OCI-LY7 (cell line): ENCODE measurements at regions of chr17 and their contacts with region 1.

Region 1: DNA sequence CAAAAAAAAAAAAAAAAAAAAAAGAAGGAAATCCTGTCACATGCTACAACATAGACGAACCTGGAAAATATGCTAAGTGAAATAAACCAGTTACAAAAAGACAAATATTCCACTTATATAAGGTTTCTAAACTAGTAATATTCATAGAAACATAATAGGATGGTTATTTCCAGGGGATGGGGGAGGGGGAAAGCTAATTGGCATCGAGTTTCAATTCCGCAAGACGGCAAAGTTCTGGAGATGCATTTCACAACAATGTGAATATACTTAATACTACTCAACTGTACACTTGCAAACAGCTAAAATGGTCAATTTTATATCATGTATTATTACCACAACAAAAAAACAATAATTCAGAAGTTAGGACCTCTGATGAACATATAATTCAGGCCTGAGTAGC is 37.9 kb upstream of the ABCA9 start:
- DNase-seq: no peak
- H3K4me3 ChIP-seq: no peak overlapping the region
- H3K27ac ChIP-seq: no peak overlapping the region
- H3K4me1 ChIP-seq: peaks cover 22% of the 10 kb centered on the region
- CTCF ChIP-seq: no peak

Region 2: GRCh38 chr17:68937890-68938514 is 160.6 kb before region 1 on chr17:
- CTCF ChIA-PET with region 1: no interaction called
- POLR2A ChIA-PET with region 1: no interaction called
- intact Hi-C with region 1: no loop called
- DNase-seq: no peak
- H3K4me3 ChIP-seq: no peak overlapping the region
- H3K27ac ChIP-seq: no peak overlapping the region
- H3K4me1 ChIP-seq: no peaks in the 10 kb centered on the region
- CTCF ChIP-seq: no peak

Region 3: DNA sequence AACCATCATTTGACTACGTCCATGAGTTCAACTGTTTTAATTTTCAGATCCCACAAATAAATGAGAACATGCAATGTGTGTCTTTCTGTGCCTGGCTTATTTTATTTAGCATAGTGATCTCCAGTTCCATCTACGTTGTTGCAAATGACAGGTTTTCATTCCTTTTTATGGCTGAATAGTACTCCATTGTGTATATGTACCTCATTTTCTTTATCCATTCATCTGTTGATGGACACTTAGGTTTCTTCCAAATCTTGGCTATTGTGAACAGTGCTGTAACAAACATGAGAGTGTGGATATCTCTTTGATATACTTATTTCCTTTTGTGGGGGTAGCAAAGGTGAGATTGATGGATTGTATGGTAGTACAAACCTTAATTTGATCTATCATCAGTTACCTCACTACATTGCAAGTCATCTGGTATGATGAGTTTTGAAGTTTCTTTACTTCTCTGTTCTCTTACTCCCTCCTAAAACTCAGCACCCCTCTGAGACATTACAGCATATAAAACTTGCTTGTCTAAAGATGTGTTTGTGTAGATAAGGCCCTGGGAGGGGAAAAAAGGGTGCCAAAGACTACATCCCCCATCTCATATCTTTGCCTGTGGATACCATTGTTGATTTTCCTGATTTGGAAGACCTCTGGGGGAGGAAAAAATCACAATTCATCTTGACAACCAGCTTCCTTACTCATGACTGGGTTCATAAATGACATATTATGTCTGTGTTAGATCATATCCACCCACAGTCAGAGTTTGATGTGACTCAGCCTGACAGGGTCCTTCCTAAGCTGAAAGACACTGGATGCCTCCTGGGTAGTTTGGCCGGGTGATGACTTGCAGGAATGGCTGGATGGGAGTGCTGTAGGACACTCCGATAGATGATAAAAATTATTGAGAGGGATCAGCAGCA is 85.5 kb before region 1 on chr17:
- CTCF ChIA-PET with region 1: no interaction called
- POLR2A ChIA-PET with region 1: no interaction called
- intact Hi-C with region 1: no loop called
- DNase-seq: no peak
- H3K4me3 ChIP-seq: no peak overlapping the region
- H3K27ac ChIP-seq: no peak overlapping the region
- H3K4me1 ChIP-seq: no peaks in the 10 kb centered on the region
- CTCF ChIP-seq: no peak

Region 4: GRCh38 chr17:69111794-69112193 is 13.2 kb after region 1 on chr17:
- CTCF ChIA-PET with region 1: no interaction called
- POLR2A ChIA-PET with region 1: interaction called, 21 read pairs
- intact Hi-C with region 1: no loop called
- DNase-seq: no peak
- H3K4me3 ChIP-seq: no peak overlapping the region
- H3K27ac ChIP-seq: no peak overlapping the region
- H3K4me1 ChIP-seq: peaks cover 40% of the 10 kb centered on the region
- CTCF ChIP-seq: no peak

Region 5: DNA sequence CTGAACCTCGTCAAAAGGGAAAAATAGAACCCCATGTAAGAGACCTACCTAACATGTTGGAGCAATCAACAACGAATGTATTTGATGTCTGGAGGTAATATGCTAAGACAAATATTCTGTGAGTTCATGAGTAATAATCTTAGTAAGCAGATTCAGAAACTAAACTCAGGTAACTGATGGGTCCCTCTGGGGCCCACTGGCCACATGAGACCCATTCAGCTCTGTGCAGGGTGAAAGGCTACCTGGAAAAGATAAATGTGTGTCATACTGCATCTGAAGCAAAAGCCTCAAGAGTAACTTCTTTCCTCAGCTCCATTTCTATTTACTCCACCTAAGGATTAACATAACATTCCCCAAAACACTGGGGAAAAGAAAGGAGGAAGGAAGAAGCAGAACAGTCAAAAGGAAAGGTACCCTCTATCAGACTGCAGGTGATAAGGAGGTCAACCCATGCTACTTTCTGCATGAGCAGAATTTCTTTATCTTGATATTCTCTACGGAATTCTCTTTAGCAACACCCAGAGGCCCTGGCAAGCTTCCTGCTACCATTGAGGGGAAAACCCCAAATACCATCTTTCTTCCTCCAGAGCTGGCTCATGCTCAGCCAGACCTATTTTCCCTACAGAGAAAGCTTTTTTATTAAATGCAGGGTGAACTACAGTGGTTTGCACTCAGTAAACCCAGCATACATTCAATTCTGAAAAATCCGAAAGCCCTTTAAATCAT is 80.8 kb after region 1 on chr17:
- CTCF ChIA-PET with region 1: no interaction called
- POLR2A ChIA-PET with region 1: no interaction called
- intact Hi-C with region 1: no loop called
- DNase-seq: no peak
- H3K4me3 ChIP-seq: no peak overlapping the region
- H3K27ac ChIP-seq: no peak overlapping the region
- H3K4me1 ChIP-seq: no peaks in the 10 kb centered on the region
- CTCF ChIP-seq: no peak

Region 6: GRCh38 chr17:69223809-69224208 is 125.2 kb after region 1 on chr17:
- CTCF ChIA-PET with region 1: no interaction called
- POLR2A ChIA-PET with region 1: no interaction called
- intact Hi-C with region 1: no loop called
- DNase-seq: peak; percentile 19
- H3K4me3 ChIP-seq: no peak overlapping the region
- H3K27ac ChIP-seq: no peak overlapping the region
- H3K4me1 ChIP-seq: peaks cover 29% of the 10 kb centered on the region
- CTCF ChIP-seq: no peak